Activated CD4-positive, alpha-beta T cell treated with anti-CD3 and anti-CD28 coated beads for 36 hours (primary cell): ENCODE measurements at regions of chr12 and their contacts with region 1.

Region 1: DNA sequence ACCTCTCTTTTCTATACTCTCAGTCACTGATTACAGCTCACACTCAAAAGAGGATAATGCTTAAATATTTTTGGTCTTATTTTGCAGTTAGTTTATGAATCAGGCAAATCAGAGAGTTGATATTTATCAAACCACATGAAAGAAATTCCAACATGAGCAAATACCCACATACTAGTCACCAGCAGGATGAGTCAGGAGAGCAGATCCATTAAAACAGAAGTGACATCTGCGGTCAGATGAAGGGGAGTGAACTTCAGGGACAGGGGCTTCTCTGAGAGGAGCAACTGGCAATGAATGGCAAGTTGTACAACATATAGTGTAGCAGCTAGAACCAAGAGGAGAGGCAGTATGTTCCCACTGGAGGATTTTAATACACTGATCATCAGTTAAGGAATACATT is 258.7 kb downstream of the SYT10 start:
- DNase-seq: no peak
- ATAC-seq: no peak
- H3K4me3 Mint-ChIP-seq: no peak overlapping the region
- H3K27ac Mint-ChIP-seq: no peak overlapping the region
- H3K4me1 Mint-ChIP-seq: no peaks in the 10 kb centered on the region
- H3K27me3 Mint-ChIP-seq: no peaks in the 10 kb centered on the region

Region 2: DNA sequence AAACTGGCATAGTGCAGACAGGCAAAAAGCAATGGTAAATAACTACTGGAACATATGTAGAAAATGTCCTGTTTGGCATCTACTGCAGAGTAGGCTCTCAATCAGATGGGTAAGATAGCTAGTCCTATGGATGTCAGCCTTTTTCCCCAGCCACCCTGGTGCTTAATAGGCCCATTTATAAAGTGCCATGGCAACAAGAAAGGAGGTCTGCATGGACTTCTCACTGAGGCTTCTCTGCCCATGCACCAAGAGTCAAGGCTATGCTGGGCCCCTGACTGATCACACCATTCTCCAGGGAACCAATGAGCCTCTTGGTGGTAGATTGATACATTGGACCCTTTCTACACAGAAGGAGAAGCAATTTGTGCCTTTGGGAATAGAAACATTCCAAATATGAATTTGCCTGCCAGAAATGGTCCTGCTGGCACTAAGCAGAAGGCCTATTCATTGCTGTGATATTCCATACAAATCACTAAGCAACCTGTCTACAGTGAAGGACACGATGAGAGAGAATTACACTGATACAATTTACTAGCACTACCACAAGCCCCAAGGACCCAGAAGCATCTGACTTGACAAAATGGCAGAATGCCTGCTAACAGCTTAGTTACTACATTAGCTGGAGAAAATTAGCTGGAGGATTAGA is 1178.0 kb before region 1 on chr12:
- CTCF ChIA-PET with region 1: no interaction called
- POLR2A ChIA-PET with region 1: no interaction called
- intact Hi-C with region 1: no loop called
- DNase-seq: no peak
- ATAC-seq: no peak
- H3K4me3 Mint-ChIP-seq: no peak overlapping the region
- H3K27ac Mint-ChIP-seq: no peak overlapping the region
- H3K4me1 Mint-ChIP-seq: no peaks in the 10 kb centered on the region
- H3K27me3 Mint-ChIP-seq: no peaks in the 10 kb centered on the region

Region 3: DNA sequence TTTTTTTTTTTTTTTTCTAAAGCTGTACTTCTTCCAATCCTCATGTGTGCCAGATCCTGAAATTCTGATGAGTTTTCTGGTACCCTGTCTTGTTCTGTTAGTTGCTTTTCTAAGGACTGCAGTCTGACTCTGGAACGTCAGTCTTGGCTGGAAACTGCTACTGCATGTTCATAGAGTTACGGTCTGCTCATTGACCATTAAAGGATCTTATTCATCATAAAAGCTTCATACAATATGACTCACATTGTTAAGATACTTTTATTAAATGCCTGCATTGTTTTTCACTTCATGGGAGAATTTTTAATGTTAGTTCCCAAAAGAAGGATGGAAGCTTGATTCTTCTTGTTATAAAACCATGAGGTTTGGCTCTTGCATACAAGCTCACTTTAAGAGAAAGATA is 25.1 kb after region 1 on chr12:
- CTCF ChIA-PET with region 1: no interaction called
- POLR2A ChIA-PET with region 1: no interaction called
- intact Hi-C with region 1: loop called in 1 of 2 experiments (anchors 2 kb)
- DNase-seq: no peak
- ATAC-seq: no peak
- H3K4me3 Mint-ChIP-seq: no peak overlapping the region
- H3K27ac Mint-ChIP-seq: no peak overlapping the region
- H3K4me1 Mint-ChIP-seq: no peaks in the 10 kb centered on the region
- H3K27me3 Mint-ChIP-seq: no peaks in the 10 kb centered on the region

Region 4: GRCh38 chr12:33290703-33291102 is 109.8 kb after region 1 on chr12:
- CTCF ChIA-PET with region 1: no interaction called
- POLR2A ChIA-PET with region 1: no interaction called
- intact Hi-C with region 1: no loop called
- DNase-seq: no peak
- ATAC-seq: no peak
- H3K4me3 Mint-ChIP-seq: no peak overlapping the region
- H3K27ac Mint-ChIP-seq: no peak overlapping the region
- H3K4me1 Mint-ChIP-seq: no peaks in the 10 kb centered on the region
- H3K27me3 Mint-ChIP-seq: no peaks in the 10 kb centered on the region

Region 5: GRCh38 chr12:33514893-33515292 is 334.0 kb after region 1 on chr12:
- CTCF ChIA-PET with region 1: no interaction called
- POLR2A ChIA-PET with region 1: no interaction called
- intact Hi-C with region 1: no loop called
- DNase-seq: no peak
- ATAC-seq: no peak
- H3K4me3 Mint-ChIP-seq: no peak overlapping the region
- H3K27ac Mint-ChIP-seq: no peak overlapping the region
- H3K4me1 Mint-ChIP-seq: no peaks in the 10 kb centered on the region
- H3K27me3 Mint-ChIP-seq: no peaks in the 10 kb centered on the region